ENCODE measurements at regions of chr11 and their contacts with region 1.

Region 1: GRCh38 chr11:44927174-44927661 is 23.5 kb downstream of the TP53I11 start:
- DNase-seq: no peak
- H3K4me3 ChIP-seq: no peak overlapping the region
- CTCF ChIP-seq: peak; percentile 89

Region 2: GRCh38 chr11:44916801-44917385 is 10.3 kb before region 1 on chr11:
- CTCF ChIA-PET with region 1: interaction called, 25 read pairs
- POLR2A ChIA-PET with region 1: no interaction called
- DNase-seq: no peak
- H3K4me3 ChIP-seq: no peak overlapping the region
- CTCF ChIP-seq: no peak

Region 3: GRCh38 chr11:44950625-44951476 is 23.6 kb after region 1 on chr11 and contains the start of gene TP53I11:
- CTCF ChIA-PET with region 1: interaction called, 15 read pairs
- POLR2A ChIA-PET with region 1: no interaction called
- DNase-seq: no peak
- H3K4me3 ChIP-seq: peak within 1 kb of the TSS; percentile 66
- CTCF ChIP-seq: peak; percentile 43

Region 4: GRCh38 chr11:45045683-45046471 is 118.7 kb after region 1 on chr11:
- CTCF ChIA-PET with region 1: no interaction called
- POLR2A ChIA-PET with region 1: no interaction called
- DNase-seq: no peak
- H3K4me3 ChIP-seq: no peak overlapping the region
- CTCF ChIP-seq: no peak

Region 5: GRCh38 chr11:45332276-45332934 is 405.2 kb after region 1 on chr11:
- CTCF ChIA-PET with region 1: interaction called, 10 read pairs
- POLR2A ChIA-PET with region 1: no interaction called
- DNase-seq: no peak
- H3K4me3 ChIP-seq: no peak overlapping the region
- CTCF ChIP-seq: peak; percentile 59